Heart left ventricle (tissue), 16 donors: ENCODE measurements at regions of chr6 and their contacts with region 1.

Region 1: GRCh38 chr6:14210663-14211561 is 93.3 kb downstream of the CD83 start:
- DNase-seq: peak; percentile 96 to 97 (median 96)
- ATAC-seq: peak; percentile 90 to 97 (median 95)
- H3K4me3 ChIP-seq: peak overlapping the region; percentile 53 to 90 (median 78)
- H3K27ac ChIP-seq: peak overlapping the region; percentile 82 to 95 (median 88)
- H3K4me1 ChIP-seq: peaks cover 0 to 23% (median 15%) of the 10 kb centered on the region in 12 donors
- H3K27me3 ChIP-seq: no peaks in the 10 kb centered on the region
- CTCF ChIP-seq: peak; percentile 28 to 98 (median 72)
- POLR2A ChIP-seq: peak in 1 of 2 donors; percentile 69

Region 2: GRCh38 chr6:14431385-14432330 is 220.7 kb after region 1 on chr6:
- intact Hi-C with region 1: loop called in 2 of 10 experiments (anchors 5 to 10 kb)
- DNase-seq: peak in 2 of 5 donors; percentile 49 to 60
- ATAC-seq: peak; percentile 92 to 96 (median 93)
- H3K4me3 ChIP-seq: peak overlapping the region; percentile 2 to 59 (median 40)
- H3K27ac ChIP-seq: peak overlapping the region in 11 of 12 donors; percentile 30 to 80 (median 50)
- H3K4me1 ChIP-seq: peaks cover 0 to 21% (median 0%) of the 10 kb centered on the region in 12 donors
- H3K27me3 ChIP-seq: no peaks in the 10 kb centered on the region
- CTCF ChIP-seq: no peak
- POLR2A ChIP-seq: no peak

Region 3: GRCh38 chr6:14711056-14711703 is 500.3 kb after region 1 on chr6:
- intact Hi-C with region 1: loop called in 7 of 10 experiments (anchors 5 to 10 kb)
- DNase-seq: peak in 3 of 5 donors; percentile 48 to 55 (median 49)
- ATAC-seq: peak in 2 of 4 donors; percentile 35 to 60
- H3K4me3 ChIP-seq: no peak overlapping the region
- H3K27ac ChIP-seq: peak overlapping the region in 4 of 12 donors; percentile 4 to 56 (median 20)
- H3K4me1 ChIP-seq: peaks cover 0 to 52% (median 26%) of the 10 kb centered on the region in 12 donors
- H3K27me3 ChIP-seq: no peaks in the 10 kb centered on the region
- CTCF ChIP-seq: peak in 11 of 12 donors; percentile 24 to 63 (median 45)
- POLR2A ChIP-seq: no peak

Region 4: DNA sequence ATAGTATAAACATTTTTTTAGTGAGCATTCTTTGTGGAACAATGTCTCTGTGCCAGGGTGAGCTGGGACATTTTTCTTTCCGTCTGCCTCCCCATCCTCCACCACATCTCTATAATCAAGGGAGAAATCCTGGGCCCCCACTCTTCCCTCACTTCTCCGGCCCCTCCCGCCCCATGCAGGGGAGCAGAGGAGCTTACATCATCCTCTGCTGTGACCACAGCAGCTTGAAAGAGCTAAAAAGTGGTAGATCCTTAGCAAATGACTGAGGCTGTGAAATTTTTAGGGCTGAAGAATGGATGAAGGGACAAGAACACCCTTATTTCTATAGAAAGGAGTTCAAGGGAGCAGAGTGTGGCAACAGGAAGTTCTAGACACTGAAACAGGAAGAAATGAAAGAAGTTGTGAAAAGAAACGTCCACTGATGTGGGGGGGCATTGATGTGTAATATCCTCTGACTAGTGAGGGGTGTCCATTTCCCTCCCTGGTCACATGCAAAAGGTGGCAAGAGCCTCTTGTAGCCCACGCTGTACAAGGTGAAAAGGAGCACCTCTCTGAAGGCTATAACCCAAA is 654.7 kb after region 1 on chr6:
- intact Hi-C with region 1: loop called in 3 of 10 experiments (anchors 10 kb)
- DNase-seq: no peak
- ATAC-seq: peak in 3 of 4 donors; percentile 34 to 41 (median 39)
- H3K4me3 ChIP-seq: no peak overlapping the region
- H3K27ac ChIP-seq: peak overlapping the region in 1 of 12 donors; percentile 72
- H3K4me1 ChIP-seq: peaks cover 0 to 27% (median 0%) of the 10 kb centered on the region in 12 donors
- H3K27me3 ChIP-seq: no peaks in the 10 kb centered on the region
- CTCF ChIP-seq: no peak
- POLR2A ChIP-seq: no peak

Region 5: GRCh38 chr6:15441215-15441868 is 1230.4 kb after region 1 on chr6:
- intact Hi-C with region 1: loop called in 2 of 10 experiments (anchors 5 kb)
- DNase-seq: peak in 3 of 5 donors; percentile 35 to 42 (median 37)
- ATAC-seq: peak in 3 of 4 donors; percentile 71 to 75 (median 74)
- H3K4me3 ChIP-seq: no peak overlapping the region
- H3K27ac ChIP-seq: no peak overlapping the region
- H3K4me1 ChIP-seq: peaks cover 3 to 87% (median 60%) of the 10 kb centered on the region in 12 donors
- H3K27me3 ChIP-seq: no peaks in the 10 kb centered on the region
- CTCF ChIP-seq: peak; percentile 67 to 92 (median 82)
- POLR2A ChIP-seq: no peak

Region 6: GRCh38 chr6:15621203-15622044 is 1410.5 kb after region 1 on chr6:
- intact Hi-C with region 1: loop called in 6 of 10 experiments (anchors 5 to 10 kb)
- DNase-seq: peak; percentile 58 to 72 (median 68)
- ATAC-seq: peak; percentile 81 to 95 (median 91)
- H3K4me3 ChIP-seq: no peak overlapping the region
- H3K27ac ChIP-seq: peak overlapping the region; percentile 50 to 87 (median 78)
- H3K4me1 ChIP-seq: peaks cover 0 to 40% (median 31%) of the 10 kb centered on the region in 12 donors
- H3K27me3 ChIP-seq: no peaks in the 10 kb centered on the region
- CTCF ChIP-seq: peak in 1 of 12 donors; percentile 8
- POLR2A ChIP-seq: no peak